ENCODE measurements at regions of chr4 and their contacts with region 1.

Region 1: GRCh38 chr4:84085986-84086385 is 413.1 kb downstream of the NKX6-1 start:
- DNase-seq: no peak
- ATAC-seq: no peak
- H3K4me3 ChIP-seq: no peak overlapping the region
- H3K27ac ChIP-seq: no peak overlapping the region
- H3K4me1 ChIP-seq: no peaks in the 10 kb centered on the region
- H3K27me3 ChIP-seq: no peaks in the 10 kb centered on the region; a peak in 2 of 5 replicates
- CTCF ChIP-seq: no peak
- EP300 ChIP-seq: no peak
- POLR2A ChIP-seq: no peak
- RAD21 ChIP-seq: no peak

Region 2: GRCh38 chr4:84070289-84070688 is 15.7 kb before region 1 on chr4:
- CTCF ChIA-PET with region 1: no interaction called
- POLR2A ChIA-PET with region 1: no interaction called
- in situ Hi-C with region 1: no loop called
- intact Hi-C with region 1: loop called (anchors 2 kb)
- DNase-seq: no peak
- ATAC-seq: no peak
- H3K4me3 ChIP-seq: no peak overlapping the region
- H3K27ac ChIP-seq: no peak overlapping the region
- H3K4me1 ChIP-seq: no peaks in the 10 kb centered on the region
- H3K27me3 ChIP-seq: peaks cover 6 to 7% of the 10 kb centered on the region in 2 experiments; a peak in 1 of 5 replicates
- CTCF ChIP-seq: no peak
- EP300 ChIP-seq: no peak
- POLR2A ChIP-seq: no peak
- RAD21 ChIP-seq: no peak